Breast epithelium (tissue), 4 donors: ENCODE measurements at regions of chr19 and their contacts with region 1.

Region 1: DNA sequence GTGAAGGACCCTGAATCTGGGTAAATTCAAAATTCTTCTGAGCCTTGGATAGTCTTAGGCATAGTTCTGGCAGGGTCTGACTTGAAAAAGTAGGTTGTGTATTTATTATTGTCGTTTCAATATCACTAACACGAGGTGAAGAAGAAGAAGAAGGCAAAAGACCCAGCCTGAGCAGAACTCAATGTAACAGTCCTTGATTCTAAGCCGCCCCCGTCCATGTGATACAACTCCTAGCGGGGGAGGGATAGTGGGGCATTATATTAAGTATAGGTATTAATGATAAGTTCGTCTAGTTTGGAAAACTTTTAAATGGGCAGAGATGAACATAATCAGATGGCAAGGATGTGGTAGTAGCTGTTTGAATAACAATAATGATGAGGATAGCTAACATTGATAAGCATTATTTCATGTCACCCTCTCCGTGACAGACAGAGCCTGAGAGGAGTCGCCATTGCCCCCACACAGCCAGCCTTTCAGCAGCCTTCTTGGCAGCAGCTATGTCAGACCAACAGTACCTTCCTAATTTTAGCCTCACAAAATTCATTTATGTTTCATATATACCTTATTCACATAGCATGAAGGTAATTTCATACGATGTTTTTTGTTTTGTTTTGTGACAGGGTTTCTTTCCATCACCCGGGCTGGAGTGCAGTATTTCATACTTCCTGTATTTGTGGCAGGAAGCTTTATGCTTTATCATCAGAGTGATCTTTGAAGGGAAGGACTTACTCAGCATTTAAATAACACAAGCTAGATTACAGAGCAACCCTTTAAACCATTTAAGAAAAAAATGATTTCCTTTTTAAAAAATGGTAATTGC is 64.4 kb upstream of the NPAS1 start:
- DNase-seq: no peak
- H3K4me3 ChIP-seq: peak overlapping the region in 1 of 3 donors; percentile 19
- H3K27ac ChIP-seq: peak overlapping the region; percentile 40 to 60
- H3K4me1 ChIP-seq: peaks cover 0 to 11% of the 10 kb centered on the region in 2 donors
- H3K27me3 ChIP-seq: no peaks in the 10 kb centered on the region
- CTCF ChIP-seq: no peak
- POLR2A ChIP-seq: no peak

Region 2: DNA sequence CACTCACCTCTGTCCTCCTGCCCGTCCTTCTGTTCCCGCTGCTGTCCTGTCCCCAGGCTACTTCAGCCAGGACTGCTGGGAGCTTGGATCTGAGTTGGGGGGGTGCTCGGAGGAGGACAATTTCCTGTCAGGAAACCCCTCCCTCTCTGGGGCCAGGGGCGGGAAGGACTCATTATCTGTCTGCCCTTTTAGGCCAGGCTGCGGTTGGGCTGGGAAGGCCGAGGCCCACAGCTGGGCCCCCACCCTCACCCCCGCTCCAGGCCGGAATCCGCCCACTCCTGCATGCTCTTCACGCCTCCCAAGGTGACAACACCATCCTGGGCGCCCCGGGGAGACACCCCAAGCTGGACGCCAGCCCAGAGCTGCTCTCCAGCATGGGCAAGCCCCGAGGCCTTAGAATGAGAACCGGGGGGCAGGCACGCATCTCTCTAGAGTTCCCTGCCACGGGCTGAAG is 1709.8 kb before region 1 on chr19 and contains the start of gene EXOC3L2:
- intact Hi-C with region 1: loop called (anchors 10 kb)
- DNase-seq: no peak
- H3K4me3 ChIP-seq: peak within 1 kb of the TSS in 2 of 3 donors; percentile 6 to 33
- H3K27ac ChIP-seq: peak within 1 kb of the TSS in 1 of 2 donors; percentile 55
- H3K4me1 ChIP-seq: no peaks in the 10 kb centered on the region
- H3K27me3 ChIP-seq: no peaks in the 10 kb centered on the region
- CTCF ChIP-seq: no peak
- POLR2A ChIP-seq: no peak
- total RNA-seq, gene EXOC3L2: 0.44 to 2.3 (median 0.64) TPM

Region 3: DNA sequence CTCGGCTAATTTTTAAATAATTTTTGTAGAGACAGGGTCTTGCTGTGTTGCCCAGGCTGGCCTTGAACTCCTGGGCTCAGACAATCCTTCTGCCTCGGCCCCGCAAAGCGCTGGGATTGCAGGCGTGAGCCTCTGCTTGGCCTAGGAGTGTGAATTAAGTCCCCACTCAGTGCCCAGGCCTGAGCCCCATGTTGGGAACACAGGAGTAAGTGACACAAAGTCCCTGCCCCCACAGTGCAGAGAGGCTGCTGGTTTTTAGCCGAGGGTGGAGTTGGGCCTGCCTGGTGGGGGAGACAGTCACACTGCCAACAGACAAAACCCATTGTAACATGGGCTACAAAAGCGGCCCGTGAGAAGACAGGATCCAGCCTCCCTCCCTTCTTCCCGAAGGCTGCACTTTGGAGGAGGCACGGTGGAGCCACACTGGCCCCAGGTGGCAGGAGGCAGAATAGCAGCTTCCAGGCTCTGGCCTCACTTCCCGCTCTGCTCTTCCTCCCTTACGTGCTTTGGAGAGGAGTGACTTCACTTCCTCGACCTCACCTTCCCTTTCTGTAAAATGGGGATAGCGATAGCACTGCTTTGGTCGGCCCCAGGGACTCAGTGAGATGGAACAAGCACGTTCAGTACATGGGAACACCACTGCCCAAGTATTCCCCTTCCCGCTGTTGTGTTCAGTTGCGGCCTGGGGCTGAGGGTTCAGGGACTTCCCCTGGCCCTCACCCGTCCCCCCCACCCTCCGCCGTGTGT is 742.8 kb after region 1 on chr19:
- intact Hi-C with region 1: no loop called
- DNase-seq: peak; percentile 60 to 84
- H3K4me3 ChIP-seq: no peak overlapping the region
- H3K27ac ChIP-seq: peak overlapping the region; percentile 72 to 80
- H3K4me1 ChIP-seq: no peaks in the 10 kb centered on the region
- H3K27me3 ChIP-seq: no peaks in the 10 kb centered on the region
- CTCF ChIP-seq: peak; percentile 95 to 99 (median 98)
- POLR2A ChIP-seq: no peak